Mammary epithelial cell (primary cell): ENCODE measurements at regions of chr7 and their contacts with region 1.

Region 1: GRCh38 chr7:113367041-113367586 is 248.8 kb upstream of the SMIM30 start:
- DNase-seq: no peak
- H3K4me3 ChIP-seq: no peak overlapping the region
- H3K27ac ChIP-seq: no peak overlapping the region
- H3K4me1 ChIP-seq: no peaks in the 10 kb centered on the region
- H3K27me3 ChIP-seq: no peaks in the 10 kb centered on the region
- CTCF ChIP-seq: no peak

Region 2: DNA sequence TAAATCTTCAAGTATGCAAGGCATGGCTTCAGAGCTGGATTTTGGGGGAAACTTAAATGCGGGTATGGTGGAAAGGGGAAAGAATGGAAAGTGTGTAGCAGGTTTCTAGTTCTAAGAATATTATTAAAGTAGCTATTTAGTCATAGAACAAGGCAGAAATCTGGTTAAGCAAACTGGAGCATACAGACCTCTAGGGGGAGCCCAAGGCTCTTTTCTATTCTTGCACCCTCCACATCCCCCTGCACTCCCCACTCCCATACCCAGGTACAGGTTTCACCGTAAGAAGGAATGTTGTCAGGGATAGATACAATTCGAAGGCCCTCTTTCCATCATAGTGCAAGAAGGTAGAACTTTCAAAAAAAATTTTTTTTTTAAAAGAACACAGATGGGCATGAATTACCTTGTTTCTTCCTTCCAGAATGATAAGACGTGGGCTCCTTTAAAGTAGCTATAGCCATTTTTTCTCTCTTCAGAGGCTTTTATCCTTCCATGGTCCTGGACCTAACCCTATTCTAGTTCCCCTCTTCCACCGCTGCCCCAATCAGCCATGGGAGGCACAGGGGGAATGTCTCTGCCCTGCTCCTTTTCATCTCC is 207.3 kb before region 1 on chr7:
- CTCF ChIA-PET with region 1: no interaction called
- dilution Hi-C with region 1: no loop called
- in situ Hi-C with region 1: no loop called
- intact Hi-C with region 1: no loop called
- DNase-seq: peak; percentile 21
- H3K4me3 ChIP-seq: no peak overlapping the region
- H3K27ac ChIP-seq: no peak overlapping the region
- H3K4me1 ChIP-seq: no peaks in the 10 kb centered on the region
- H3K27me3 ChIP-seq: no peaks in the 10 kb centered on the region
- CTCF ChIP-seq: peak; percentile 59 to 82

Region 3: DNA sequence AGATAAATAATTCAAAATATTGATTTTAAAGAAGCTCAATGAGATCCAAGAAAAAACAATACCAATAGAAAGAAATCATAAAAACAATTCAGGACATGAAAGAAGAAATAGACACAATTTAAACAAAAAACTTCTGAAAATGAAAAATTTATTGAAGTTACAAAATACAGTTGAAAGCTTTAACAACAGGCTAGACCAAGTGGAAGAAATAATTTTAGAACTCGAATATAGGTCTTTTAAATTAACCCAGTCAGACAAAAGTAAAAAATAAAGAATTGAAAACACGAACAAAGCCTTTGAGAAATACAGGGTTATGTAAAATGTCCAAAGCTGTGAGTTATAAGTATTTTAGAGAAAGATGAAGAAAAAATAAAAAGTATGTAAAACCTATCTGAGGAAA is 96.3 kb before region 1 on chr7:
- CTCF ChIA-PET with region 1: no interaction called
- dilution Hi-C with region 1: loop called (anchors 5 kb)
- in situ Hi-C with region 1: no loop called
- intact Hi-C with region 1: no loop called
- DNase-seq: no peak
- H3K4me3 ChIP-seq: no peak overlapping the region
- H3K27ac ChIP-seq: no peak overlapping the region
- H3K4me1 ChIP-seq: no peaks in the 10 kb centered on the region
- H3K27me3 ChIP-seq: no peaks in the 10 kb centered on the region
- CTCF ChIP-seq: no peak

Region 4: GRCh38 chr7:113444261-113444660 is 77.1 kb after region 1 on chr7:
- CTCF ChIA-PET with region 1: no interaction called
- dilution Hi-C with region 1: no loop called
- in situ Hi-C with region 1: no loop called
- intact Hi-C with region 1: no loop called
- DNase-seq: peak; percentile 32
- H3K4me3 ChIP-seq: no peak overlapping the region
- H3K27ac ChIP-seq: no peak overlapping the region
- H3K4me1 ChIP-seq: no peaks in the 10 kb centered on the region
- H3K27me3 ChIP-seq: no peaks in the 10 kb centered on the region
- CTCF ChIP-seq: no peak